Spleen (tissue), 13 donors: ENCODE measurements at regions of chr12 and their contacts with region 1.

Region 1: GRCh38 chr12:110513842-110514241 is 11.7 kb downstream of the RAD9B start:
- DNase-seq: no peak
- H3K4me3 ChIP-seq: no peak overlapping the region
- H3K27ac ChIP-seq: no peak overlapping the region
- H3K4me1 ChIP-seq: peaks cover 0 to 8% (median 7%) of the 10 kb centered on the region in 6 donors
- H3K27me3 ChIP-seq: no peaks in the 10 kb centered on the region
- CTCF ChIP-seq: no peak
- POLR2A ChIP-seq: no peak

Region 2: GRCh38 chr12:110704748-110705147 is 190.9 kb after region 1 on chr12:
- intact Hi-C with region 1: loop called (anchors 10 kb)
- DNase-seq: no peak
- H3K4me3 ChIP-seq: no peak overlapping the region
- H3K27ac ChIP-seq: no peak overlapping the region
- H3K4me1 ChIP-seq: no peaks in the 10 kb centered on the region
- H3K27me3 ChIP-seq: no peaks in the 10 kb centered on the region
- CTCF ChIP-seq: no peak
- POLR2A ChIP-seq: no peak